ENCODE measurements at regions of chr17 and their contacts with region 1.

Region 1: GRCh38 chr17:50949989-50950881 is 84.1 kb upstream of the TOB1 start:
- DNase-seq: peak; percentile 85 to 92 (median 88)
- H3K4me3 ChIP-seq: peak overlapping the region in 2 of 3 experiments; percentile 11 to 57
- H3K4me3 Mint-ChIP-seq: peak overlapping the region; percentile 63 to 80
- H3K27ac ChIP-seq: peak overlapping the region; percentile 92 to 95
- H3K27ac Mint-ChIP-seq: peak overlapping the region; percentile 93 to 98 (median 96)
- H3K4me1 ChIP-seq: peaks cover 49 to 59% of the 10 kb centered on the region in 2 donors
- H3K4me1 Mint-ChIP-seq: peaks cover 57% of the 10 kb centered on the region
- H3K27me3 ChIP-seq: no peaks in the 10 kb centered on the region
- H3K27me3 Mint-ChIP-seq: peaks cover 4 to 12% (median 6%) of the 10 kb centered on the region in 3 donors
- CTCF ChIP-seq: peak; percentile 95

Region 2: DNA sequence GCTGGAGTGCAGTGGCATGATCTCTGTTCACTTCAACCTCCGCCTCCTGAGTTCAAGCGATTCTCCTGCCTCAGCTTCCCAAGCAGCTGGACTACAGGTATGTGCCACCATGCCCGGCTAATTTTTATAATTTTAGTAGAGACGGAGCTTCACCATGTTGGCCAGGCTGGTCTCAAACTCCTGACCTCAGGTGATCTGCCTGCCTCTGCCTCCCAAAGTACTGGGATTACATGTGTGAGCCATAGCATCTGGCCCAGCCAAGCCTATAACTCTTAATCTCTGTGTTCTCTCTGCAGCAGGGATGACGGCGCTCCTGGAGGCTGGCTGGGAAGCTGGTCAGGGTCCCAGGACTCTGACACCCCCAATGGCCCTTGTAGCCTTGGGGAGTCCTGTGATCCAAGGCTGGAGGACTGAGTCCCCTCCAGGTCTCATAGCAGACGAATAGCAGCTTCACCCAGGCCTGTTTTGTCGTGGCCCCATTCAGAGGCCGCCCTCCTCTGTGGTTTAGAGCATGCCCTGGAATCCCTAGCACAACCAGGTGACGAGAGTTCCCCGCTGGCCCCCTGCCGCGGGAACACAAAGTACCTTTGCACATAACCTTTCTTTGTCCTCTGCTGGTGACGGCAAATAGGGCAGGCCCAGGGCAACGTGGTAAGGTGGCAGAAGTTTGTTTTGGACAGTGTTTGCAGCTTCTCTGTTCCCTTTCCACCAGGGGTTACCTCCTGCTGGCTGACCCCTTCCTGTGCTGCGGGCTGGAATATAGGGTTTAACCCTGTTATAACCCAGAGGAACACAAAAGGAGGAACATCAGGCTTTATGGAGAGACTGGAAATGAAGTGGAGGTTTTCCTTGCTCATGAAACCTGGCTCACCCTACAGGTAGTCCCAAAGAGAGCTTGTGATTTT is 41.1 kb before region 1 on chr17:
- intact Hi-C with region 1: no loop called
- DNase-seq: no peak
- H3K4me3 ChIP-seq: peak overlapping the region in 1 of 3 experiments; percentile 23
- H3K4me3 Mint-ChIP-seq: peak overlapping the region in 1 of 2 donors; percentile 35
- H3K27ac ChIP-seq: peak overlapping the region; percentile 78
- H3K27ac Mint-ChIP-seq: peak overlapping the region; percentile 80 to 94 (median 92)
- H3K4me1 ChIP-seq: peaks cover 46 to 50% of the 10 kb centered on the region in 2 donors
- H3K4me1 Mint-ChIP-seq: peaks cover 49% of the 10 kb centered on the region
- H3K27me3 ChIP-seq: no peaks in the 10 kb centered on the region
- H3K27me3 Mint-ChIP-seq: peaks cover 0 to 5% (median 3%) of the 10 kb centered on the region in 3 donors
- CTCF ChIP-seq: no peak

Region 3: GRCh38 chr17:50919321-50920085 is 30.7 kb before region 1 on chr17:
- intact Hi-C with region 1: loop called in 1 of 2 experiments (anchors 5 kb)
- DNase-seq: peak; percentile 91 to 94 (median 92)
- H3K4me3 ChIP-seq: peak overlapping the region in 1 of 3 experiments; percentile 21
- H3K4me3 Mint-ChIP-seq: peak overlapping the region; percentile 39 to 52
- H3K27ac ChIP-seq: peak overlapping the region; percentile 74 to 75
- H3K27ac Mint-ChIP-seq: peak overlapping the region; percentile 96 to 99 (median 98)
- H3K4me1 ChIP-seq: peaks cover 45 to 51% of the 10 kb centered on the region in 2 donors
- H3K4me1 Mint-ChIP-seq: peaks cover 58% of the 10 kb centered on the region
- H3K27me3 ChIP-seq: no peaks in the 10 kb centered on the region
- H3K27me3 Mint-ChIP-seq: peaks cover 0 to 2% (median 0%) of the 10 kb centered on the region in 3 donors
- CTCF ChIP-seq: no peak

Region 4: DNA sequence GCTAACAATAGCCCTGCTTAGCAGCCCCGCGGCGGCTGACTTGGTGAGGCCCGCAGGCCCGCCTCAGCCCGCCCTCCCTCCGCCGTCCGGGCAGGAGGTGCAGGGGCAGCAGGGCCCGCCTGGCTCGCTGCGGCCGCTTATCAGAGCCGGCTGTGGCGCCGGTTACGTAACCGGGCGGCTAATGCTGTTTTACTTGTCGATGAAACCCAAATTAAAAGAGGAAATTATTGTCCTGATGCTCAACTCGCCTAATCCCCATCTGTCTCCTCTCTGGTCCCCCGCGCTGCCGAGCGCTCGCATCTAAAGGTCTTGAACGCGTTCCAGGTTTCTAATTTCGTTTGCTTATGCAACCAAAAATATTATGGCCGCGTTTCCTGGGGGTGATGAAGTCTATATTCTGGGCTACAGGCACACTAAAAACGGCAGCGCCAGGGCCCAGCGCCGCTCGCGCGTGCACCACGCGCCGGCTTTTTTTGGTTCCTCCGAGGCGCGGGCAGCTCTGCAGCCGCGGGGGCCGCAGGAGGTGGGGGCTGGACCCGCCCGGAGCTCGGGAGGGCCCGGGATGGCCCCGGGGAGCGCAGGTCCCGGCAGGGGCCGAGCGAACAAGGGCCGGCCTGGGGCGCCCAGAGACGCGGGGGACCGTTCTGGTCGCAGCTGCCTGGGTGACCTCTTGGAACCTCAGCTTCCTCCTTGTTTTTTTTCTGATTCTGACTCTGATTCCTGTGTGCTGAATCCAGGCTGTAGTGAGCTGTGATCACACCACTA is 18.9 kb before region 1 on chr17:
- intact Hi-C with region 1: loop called (anchors 2 kb)
- DNase-seq: peak; percentile 74 to 83 (median 76)
- H3K4me3 ChIP-seq: peak overlapping the region; percentile 13 to 67 (median 17)
- H3K4me3 Mint-ChIP-seq: peak overlapping the region; percentile 70 to 87
- H3K27ac ChIP-seq: peak overlapping the region; percentile 76 to 86
- H3K27ac Mint-ChIP-seq: peak overlapping the region; percentile 91 to 97 (median 96)
- H3K4me1 ChIP-seq: peaks cover 79 to 87% of the 10 kb centered on the region in 2 donors
- H3K4me1 Mint-ChIP-seq: peaks cover 84% of the 10 kb centered on the region
- H3K27me3 ChIP-seq: no peaks in the 10 kb centered on the region
- H3K27me3 Mint-ChIP-seq: peaks cover 0 to 6% (median 3%) of the 10 kb centered on the region in 3 donors
- CTCF ChIP-seq: no peak

Measured in CD14-positive monocyte (primary cell).